Spleen (tissue), 13 donors: ENCODE measurements at regions of chr3 and their contacts with region 1.

Region 1: GRCh38 chr3:99875929-99876841 is 58.5 kb downstream of the CMSS1 start:
- DNase-seq: peak; percentile 94
- H3K4me3 ChIP-seq: peak overlapping the region; percentile 34 to 73 (median 51)
- H3K27ac ChIP-seq: peak overlapping the region; percentile 61 to 88 (median 85)
- H3K4me1 ChIP-seq: peaks cover 0 to 41% (median 20%) of the 10 kb centered on the region in 6 donors
- H3K27me3 ChIP-seq: peaks cover 0 to 13% (median 0%) of the 10 kb centered on the region in 7 donors
- CTCF ChIP-seq: peak in 3 of 11 experiments; percentile 16 to 21 (median 17)
- POLR2A ChIP-seq: peak in 1 of 3 donors; percentile 49

Region 2: DNA sequence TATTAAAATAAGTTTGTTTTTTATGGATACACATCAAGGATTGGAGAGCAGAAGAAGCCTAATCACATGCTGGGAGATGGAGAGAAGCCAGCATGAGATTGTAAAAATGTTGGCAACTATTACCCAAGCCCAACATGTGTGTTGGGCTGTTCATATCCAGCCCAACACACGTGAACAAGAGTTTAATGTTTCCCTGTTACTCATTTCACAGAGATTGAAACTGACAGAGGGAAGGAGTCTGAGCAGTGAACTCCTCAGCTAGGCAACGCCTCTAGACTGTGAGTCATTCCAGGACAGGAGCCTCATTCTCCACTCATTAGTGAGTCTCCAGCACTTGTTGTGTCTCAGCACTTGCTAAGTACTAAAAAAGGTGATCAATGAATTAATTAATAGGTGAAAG is 101.7 kb before region 1 on chr3:
- intact Hi-C with region 1: no loop called
- DNase-seq: no peak
- H3K4me3 ChIP-seq: no peak overlapping the region
- H3K27ac ChIP-seq: no peak overlapping the region
- H3K4me1 ChIP-seq: no peaks in the 10 kb centered on the region
- H3K27me3 ChIP-seq: peaks cover 0 to 8% (median 0%) of the 10 kb centered on the region in 7 donors
- CTCF ChIP-seq: no peak
- POLR2A ChIP-seq: no peak

Region 3: DNA sequence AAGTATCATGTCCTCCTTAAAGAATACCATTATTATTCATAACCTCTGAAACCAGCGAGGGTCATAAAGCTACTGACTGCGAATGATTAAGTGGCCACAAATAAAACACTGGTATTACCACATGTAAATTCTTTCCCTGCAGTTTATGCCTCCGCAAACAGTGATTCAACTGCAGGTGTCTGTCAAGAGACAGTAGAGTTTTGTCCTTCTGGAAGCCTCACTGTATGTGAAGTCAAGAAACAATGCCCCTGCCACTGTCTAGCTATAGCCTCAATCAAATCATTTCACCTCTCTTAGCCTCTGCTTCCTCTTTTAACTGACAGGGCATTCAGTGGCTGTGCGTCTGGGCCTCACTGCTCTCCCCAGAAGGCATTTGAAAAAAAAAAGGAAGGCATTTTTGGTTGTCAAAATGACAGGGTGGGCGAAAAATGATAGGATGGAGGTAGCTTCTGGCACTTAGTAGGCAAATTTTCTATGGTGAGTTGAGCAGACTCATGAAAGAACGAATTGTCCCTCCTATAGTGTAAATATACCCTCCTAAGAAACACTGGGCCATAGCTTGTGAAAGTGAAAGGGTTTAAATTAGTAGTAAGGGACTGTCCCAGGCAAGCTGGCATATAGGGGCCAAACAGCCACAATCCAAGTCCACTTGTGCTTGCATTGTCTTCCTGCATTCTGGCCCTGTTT is 171.4 kb after region 1 on chr3:
- intact Hi-C with region 1: loop called (anchors 10 kb)
- DNase-seq: no peak
- H3K4me3 ChIP-seq: peak overlapping the region in 2 of 8 donors; percentile 10 to 23
- H3K27ac ChIP-seq: peak overlapping the region; percentile 44 to 87 (median 71)
- H3K4me1 ChIP-seq: peaks cover 15 to 63% (median 59%) of the 10 kb centered on the region in 6 donors
- H3K27me3 ChIP-seq: no peaks in the 10 kb centered on the region
- CTCF ChIP-seq: no peak
- POLR2A ChIP-seq: no peak

Region 4: GRCh38 chr3:100316641-100317069 is 440.5 kb after region 1 on chr3:
- intact Hi-C with region 1: no loop called
- DNase-seq: no peak
- H3K4me3 ChIP-seq: no peak overlapping the region
- H3K27ac ChIP-seq: peak overlapping the region in 3 of 8 donors; percentile 9 to 44 (median 31)
- H3K4me1 ChIP-seq: peaks cover 0 to 25% (median 12%) of the 10 kb centered on the region in 6 donors
- H3K27me3 ChIP-seq: no peaks in the 10 kb centered on the region
- CTCF ChIP-seq: peak; percentile 49 to 80 (median 64)
- POLR2A ChIP-seq: no peak